ENCODE measurements at regions of chr15 and their contacts with region 1.

Region 1: DNA sequence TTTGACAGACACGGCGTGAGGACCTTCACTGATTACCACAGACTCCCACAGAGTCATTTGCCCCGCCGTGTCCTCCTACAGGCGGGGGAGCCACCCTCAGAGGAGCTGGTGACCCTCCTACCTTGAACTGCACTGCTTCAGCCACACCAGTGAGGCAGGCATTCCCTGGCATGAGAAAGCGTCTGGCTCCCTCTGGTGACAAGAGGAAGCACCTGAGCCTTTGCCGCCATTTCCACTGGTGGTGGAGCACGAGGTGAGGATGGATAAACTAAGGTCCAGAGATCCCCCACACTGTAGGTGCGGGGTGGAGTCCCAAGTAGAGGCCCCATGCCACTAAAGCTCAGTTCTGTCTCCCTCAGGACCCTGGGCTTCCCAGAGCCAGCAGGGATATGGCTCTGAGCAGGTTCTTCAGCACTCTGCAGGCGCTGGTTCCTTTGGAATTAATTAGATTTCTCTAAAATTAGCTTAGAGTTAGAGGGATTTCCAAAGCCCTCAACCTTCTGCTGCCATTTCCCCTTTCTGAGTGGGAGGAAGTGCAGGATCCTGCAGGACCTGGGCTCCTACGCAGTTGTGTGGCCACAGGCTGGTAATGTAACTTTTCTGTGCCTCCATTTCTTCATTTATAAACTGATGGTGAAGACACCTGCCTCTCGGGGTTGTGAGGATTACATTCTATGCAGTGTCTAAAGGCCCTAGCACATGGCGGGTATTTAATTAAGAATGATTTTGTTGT is 224.0 kb downstream of the SLCO3A1 start:
- DNase-seq: peak; percentile 78
- H3K4me3 ChIP-seq: no peak overlapping the region
- H3K27ac ChIP-seq: no peak overlapping the region
- H3K4me1 ChIP-seq: no peaks in the 10 kb centered on the region
- H3K27me3 ChIP-seq: no peaks in the 10 kb centered on the region
- CTCF ChIP-seq: peak; percentile 64

Region 2: GRCh38 chr15:91706322-91707032 is 371.0 kb before region 1 on chr15:
- intact Hi-C with region 1: loop called (anchors 5 kb)
- DNase-seq: peak; percentile 81
- H3K4me3 ChIP-seq: no peak overlapping the region
- H3K27ac ChIP-seq: no peak overlapping the region
- H3K4me1 ChIP-seq: no peaks in the 10 kb centered on the region
- H3K27me3 ChIP-seq: no peaks in the 10 kb centered on the region
- CTCF ChIP-seq: peak; percentile 65

Region 3: DNA sequence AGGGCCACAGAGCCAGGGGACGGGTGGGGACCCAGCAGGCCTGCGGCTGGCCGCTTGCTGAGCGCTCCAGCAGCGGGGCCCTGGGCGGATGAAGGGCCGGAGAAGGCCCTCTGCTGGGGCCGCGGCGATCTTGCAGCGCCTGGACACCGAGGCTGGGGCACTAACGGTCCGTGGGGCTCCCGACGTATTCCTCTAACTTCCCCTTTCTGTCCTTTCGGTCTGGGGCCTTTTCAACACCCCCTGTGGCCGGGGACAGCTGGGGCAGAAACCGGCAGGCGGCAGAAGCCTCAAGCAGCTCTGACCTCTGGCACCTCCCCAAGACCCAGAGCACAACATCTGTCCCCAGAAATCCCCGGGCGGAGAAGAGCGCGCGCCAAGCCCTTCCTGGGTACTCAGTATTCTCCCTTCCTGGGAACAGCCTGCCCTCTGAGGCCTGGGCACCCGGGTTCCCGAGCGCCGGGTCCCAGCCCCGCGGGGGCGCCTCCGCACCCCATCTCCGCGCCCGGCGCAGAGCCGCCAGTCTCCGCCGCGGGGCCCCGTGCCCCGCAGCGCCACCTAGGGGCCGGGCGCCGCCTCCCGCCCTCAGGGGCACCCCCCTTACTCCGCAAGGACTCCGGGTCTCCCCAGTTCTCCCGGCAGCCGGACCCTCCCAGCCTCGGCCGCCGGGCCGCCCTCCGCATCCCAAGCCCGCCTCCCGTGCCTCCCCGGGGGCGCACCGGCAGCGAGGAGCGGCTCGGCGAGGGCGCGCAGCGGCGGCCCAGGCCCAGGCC is 224.6 kb before region 1 on chr15:
- intact Hi-C with region 1: loop called (anchors 5 kb)
- DNase-seq: peak; percentile 75
- H3K4me3 ChIP-seq: peak overlapping the region; percentile 68
- H3K27ac ChIP-seq: peak overlapping the region; percentile 77
- H3K4me1 ChIP-seq: no peaks in the 10 kb centered on the region
- H3K27me3 ChIP-seq: no peaks in the 10 kb centered on the region
- CTCF ChIP-seq: peak; percentile 55

Region 4: GRCh38 chr15:92012368-92012629 is 65.2 kb before region 1 on chr15:
- intact Hi-C with region 1: no loop called
- DNase-seq: no peak
- H3K4me3 ChIP-seq: no peak overlapping the region
- H3K27ac ChIP-seq: no peak overlapping the region
- H3K4me1 ChIP-seq: no peaks in the 10 kb centered on the region
- H3K27me3 ChIP-seq: no peaks in the 10 kb centered on the region
- CTCF ChIP-seq: no peak

Measured in colonic mucosa (tissue), 4 donors.